ENCODE measurements at regions of chr22 and their contacts with region 1.

Region 1: GRCh38 chr22:43945632-43946383 is 9.4 kb upstream of the SAMM50 start:
- DNase-seq: no peak
- H3K4me3 ChIP-seq: no peak overlapping the region
- CTCF ChIP-seq: peak; percentile 94

Region 2: DNA sequence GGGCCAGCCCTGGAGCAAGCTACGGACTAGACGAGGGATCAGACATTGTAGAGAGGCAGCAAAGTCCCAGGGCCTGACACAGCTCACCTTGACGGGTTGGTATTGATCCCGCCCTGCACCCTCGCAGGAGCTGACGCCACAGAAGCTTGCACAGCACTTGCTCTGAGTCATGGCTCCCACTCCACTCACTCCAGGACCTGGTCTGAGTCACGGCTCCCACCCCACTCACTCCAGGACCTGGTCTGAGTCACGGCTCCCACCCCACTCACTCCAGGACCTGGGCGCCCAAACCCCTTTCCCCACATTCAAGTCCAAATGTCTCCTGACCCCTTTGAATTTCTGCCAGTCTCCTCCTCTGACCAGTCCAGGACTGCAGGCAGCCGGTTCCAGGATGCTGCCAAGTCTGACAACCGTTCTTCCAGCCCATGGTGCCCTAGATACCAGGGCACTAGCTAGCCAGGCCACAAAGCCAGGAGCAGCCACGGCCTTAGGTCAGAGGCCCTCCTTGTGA is 48.0 kb before region 1 on chr22:
- CTCF ChIA-PET with region 1: interaction called, 58 read pairs
- POLR2A ChIA-PET with region 1: no interaction called
- DNase-seq: no peak
- H3K4me3 ChIP-seq: no peak overlapping the region
- CTCF ChIP-seq: no peak

Region 3: DNA sequence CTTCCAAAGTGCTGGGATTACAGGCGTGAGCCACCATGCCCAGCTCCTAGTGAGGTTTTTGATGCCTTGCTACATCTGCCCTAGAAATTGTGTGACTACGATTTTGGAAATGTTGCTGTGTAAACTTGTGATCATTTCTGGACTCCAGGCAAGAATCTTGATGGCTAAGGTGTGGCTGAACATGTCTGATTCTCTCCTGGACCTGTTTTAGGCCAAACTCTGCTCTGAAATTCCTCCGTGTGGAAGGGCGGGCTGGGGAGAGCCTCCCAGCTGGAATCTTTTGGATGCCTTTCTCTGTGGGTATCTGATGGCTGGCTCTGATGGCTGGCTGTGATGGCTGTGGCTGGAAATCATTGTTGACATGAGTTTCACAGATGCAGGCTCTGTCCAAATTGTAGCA is 14.0 kb before region 1 on chr22:
- CTCF ChIA-PET with region 1: interaction called, 58 read pairs
- POLR2A ChIA-PET with region 1: no interaction called
- DNase-seq: no peak
- H3K4me3 ChIP-seq: no peak overlapping the region
- CTCF ChIP-seq: no peak

Region 4: DNA sequence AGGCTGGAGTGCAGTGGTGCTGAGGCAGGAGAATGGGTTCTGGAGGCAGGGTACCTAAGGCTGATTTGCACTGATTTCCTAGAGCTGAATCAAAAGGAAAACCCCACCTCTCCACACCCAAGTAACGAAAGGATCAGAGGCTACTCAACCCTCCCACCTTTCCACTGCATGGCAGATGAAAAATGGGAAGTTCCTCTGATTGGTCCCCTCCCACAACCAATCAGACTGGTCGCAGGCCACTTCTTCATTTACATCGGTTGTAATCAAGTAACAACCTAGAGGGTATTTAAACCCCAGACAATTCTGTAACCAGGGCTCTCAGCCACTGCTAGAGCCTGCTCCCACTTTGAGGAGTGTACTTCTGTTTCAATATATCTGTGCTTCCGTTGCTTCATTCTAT is 59.7 kb after region 1 on chr22:
- CTCF ChIA-PET with region 1: no interaction called
- POLR2A ChIA-PET with region 1: no interaction called
- DNase-seq: no peak
- H3K4me3 ChIP-seq: no peak overlapping the region
- CTCF ChIP-seq: no peak

Measured in AG04449 (cell line).